ENCODE measurements at regions of chr1 and their contacts with region 1.

Region 1: DNA sequence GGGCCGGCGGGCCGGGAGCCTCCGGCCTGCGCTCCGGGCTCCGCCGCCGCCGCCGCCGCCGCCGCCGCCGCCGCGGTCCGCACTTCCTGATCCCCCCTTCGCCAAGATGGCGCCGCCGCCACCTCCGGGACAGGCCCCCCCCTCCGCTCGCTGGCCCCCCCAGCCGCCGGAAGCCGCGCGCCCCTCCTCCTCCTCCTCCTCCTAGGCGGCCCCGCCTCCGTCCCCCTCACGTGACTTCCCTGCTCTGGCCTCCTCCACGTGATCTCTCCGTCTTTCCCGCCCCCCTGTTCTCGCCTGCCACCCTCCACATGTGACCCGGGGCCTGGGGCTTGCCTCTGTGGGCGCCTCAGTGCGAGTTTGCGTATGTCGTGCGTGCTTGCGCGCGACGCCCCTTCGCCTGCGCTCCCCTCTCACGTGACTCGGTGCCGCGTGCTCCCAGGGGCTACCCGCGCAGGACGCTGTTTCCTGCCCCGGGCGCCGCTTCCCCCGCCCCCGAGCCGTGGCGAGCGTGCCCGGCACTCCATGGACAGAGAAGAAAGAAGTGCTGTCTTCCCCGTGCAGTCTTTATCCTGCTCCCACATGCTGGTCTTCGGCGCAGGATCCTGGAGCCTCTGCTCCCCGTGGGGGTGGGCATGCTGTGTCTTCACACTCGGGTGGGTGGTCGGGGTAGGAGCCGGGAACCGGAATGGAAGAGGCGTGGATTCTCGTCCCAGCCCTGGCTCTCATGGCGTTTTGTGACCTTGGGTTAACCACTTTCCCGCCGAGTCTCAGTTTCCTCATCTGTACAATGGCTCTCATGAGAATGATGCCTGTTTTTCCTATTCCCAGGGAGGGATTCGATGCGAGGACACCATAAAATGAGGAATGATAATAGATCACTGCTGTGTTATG is at the start of gene UBE2Q1:
- DNase-seq: peak; percentile 92 to 100 (median 100)
- ATAC-seq: peak; percentile 94
- H3K4me3 ChIP-seq: peak within 1 kb of the TSS; percentile 81
- H3K4me3 Mint-ChIP-seq: peak within 1 kb of the TSS; percentile 89 to 98 (median 96)
- H3K27ac ChIP-seq: peak within 1 kb of the TSS; percentile 86
- H3K27ac Mint-ChIP-seq: peak within 1 kb of the TSS; percentile 90 to 97 (median 94)
- H3K4me1 ChIP-seq: peaks cover 18 to 23% of the 10 kb centered on the region in 2 donors
- H3K4me1 Mint-ChIP-seq: peaks cover 12 to 45% (median 39%) of the 10 kb centered on the region in 7 donors
- H3K27me3 ChIP-seq: no peaks in the 10 kb centered on the region
- H3K27me3 Mint-ChIP-seq: peaks cover 0 to 2% (median 0%) of the 10 kb centered on the region in 5 donors
- total RNA-seq, gene UBE2Q1: 63.2 to 117 (median 106) TPM

Region 2: DNA sequence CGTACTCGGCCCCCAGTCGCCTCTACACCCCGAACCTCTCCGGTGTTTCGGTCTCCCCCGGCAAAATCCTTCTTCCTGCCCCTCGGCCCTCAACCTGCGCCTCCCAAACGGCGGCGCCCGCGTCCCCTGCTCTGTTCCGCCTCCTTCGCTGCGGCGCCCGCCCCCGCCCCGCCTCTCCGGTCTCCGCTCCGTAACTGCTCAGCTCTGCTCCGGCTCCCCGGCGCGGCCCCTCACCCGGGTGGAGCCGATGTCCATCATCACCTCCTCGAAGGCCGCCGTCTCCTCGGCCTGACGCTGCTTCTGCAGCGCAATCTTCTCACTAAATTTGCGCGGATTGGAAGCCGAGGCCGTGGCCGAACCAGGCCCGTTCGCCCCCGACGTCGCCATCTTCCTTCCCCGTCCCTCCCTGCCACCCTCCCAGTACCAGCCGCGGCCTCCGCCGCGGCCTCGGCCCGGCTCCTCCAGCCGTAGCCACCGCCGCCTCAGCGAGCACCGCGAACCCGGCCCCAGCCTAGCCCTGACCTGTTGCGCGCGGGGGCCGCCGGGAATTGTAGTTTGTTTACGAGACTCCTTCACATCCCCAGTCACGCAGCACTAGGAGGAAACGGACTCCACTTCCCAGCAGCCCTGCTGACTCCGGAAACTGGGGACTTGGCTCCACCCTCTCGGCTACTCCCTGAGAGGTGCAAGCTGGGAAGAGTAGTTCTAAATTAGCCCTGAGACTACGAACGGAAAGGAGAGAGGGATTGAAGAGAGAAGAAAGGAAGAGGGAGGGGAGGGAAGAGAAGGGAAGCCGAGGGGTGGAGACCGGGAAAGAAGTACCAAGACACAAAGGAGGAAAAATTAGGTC is 600.5 kb before region 1 on chr1 and contains the start of gene CRTC2:
- CTCF ChIA-PET with region 1: no interaction called
- POLR2A ChIA-PET with region 1: no interaction called
- intact Hi-C with region 1: loop called in 1 of 2 experiments (anchors 2 kb)
- DNase-seq: peak; percentile 86 to 99 (median 96)
- ATAC-seq: peak; percentile 94
- H3K4me3 ChIP-seq: peak within 1 kb of the TSS; percentile 74
- H3K4me3 Mint-ChIP-seq: peak within 1 kb of the TSS; percentile 91 to 100 (median 97)
- H3K27ac ChIP-seq: peak within 1 kb of the TSS; percentile 92
- H3K27ac Mint-ChIP-seq: peak within 1 kb of the TSS; percentile 89 to 98 (median 94)
- H3K4me1 ChIP-seq: peaks cover 36% of the 10 kb centered on the region in 2 donors
- H3K4me1 Mint-ChIP-seq: peaks cover 34 to 71% (median 67%) of the 10 kb centered on the region in 7 donors
- H3K27me3 ChIP-seq: no peaks in the 10 kb centered on the region
- H3K27me3 Mint-ChIP-seq: no peaks in the 10 kb centered on the region
- total RNA-seq, gene CRTC2: 86.1 to 157 (median 119) TPM

Region 3: GRCh38 chr1:154324669-154325582 is 233.9 kb before region 1 on chr1 and contains the start of gene ATP8B2:
- CTCF ChIA-PET with region 1: interaction called, 3 read pairs
- POLR2A ChIA-PET with region 1: no interaction called
- intact Hi-C with region 1: loop called (anchors 2 kb)
- DNase-seq: peak; percentile 60 to 82 (median 77)
- ATAC-seq: peak; percentile 80
- H3K4me3 ChIP-seq: peak within 1 kb of the TSS; percentile 79
- H3K4me3 Mint-ChIP-seq: peak within 1 kb of the TSS; percentile 92 to 98 (median 96)
- H3K27ac ChIP-seq: peak within 1 kb of the TSS; percentile 94
- H3K27ac Mint-ChIP-seq: peak within 1 kb of the TSS; percentile 80 to 95 (median 92)
- H3K4me1 ChIP-seq: peaks cover 24 to 36% of the 10 kb centered on the region in 2 donors
- H3K4me1 Mint-ChIP-seq: peaks cover 27 to 42% (median 38%) of the 10 kb centered on the region in 7 donors
- H3K27me3 ChIP-seq: no peaks in the 10 kb centered on the region
- H3K27me3 Mint-ChIP-seq: peaks cover 0 to 31% (median 0%) of the 10 kb centered on the region in 5 donors
- total RNA-seq, gene ATP8B2: 105 to 130 (median 117) TPM

Region 4: GRCh38 chr1:154627257-154628120 is 68.7 kb after region 1 on chr1:
- CTCF ChIA-PET with region 1: interaction called, 10 read pairs
- POLR2A ChIA-PET with region 1: interaction called, 3 read pairs
- intact Hi-C with region 1: loop called in 1 of 2 experiments (anchors 1 kb)
- DNase-seq: peak; percentile 78 to 92 (median 90)
- ATAC-seq: peak; percentile 81
- H3K4me3 ChIP-seq: peak overlapping the region; percentile 72
- H3K4me3 Mint-ChIP-seq: peak overlapping the region; percentile 85 to 100 (median 94)
- H3K27ac ChIP-seq: peak overlapping the region; percentile 99
- H3K27ac Mint-ChIP-seq: peak overlapping the region; percentile 98 to 100 (median 99)
- H3K4me1 ChIP-seq: peaks cover 15% of the 10 kb centered on the region in 2 donors
- H3K4me1 Mint-ChIP-seq: peaks cover 20 to 54% (median 44%) of the 10 kb centered on the region in 7 donors
- H3K27me3 ChIP-seq: no peaks in the 10 kb centered on the region
- H3K27me3 Mint-ChIP-seq: peaks cover 0 to 20% (median 7%) of the 10 kb centered on the region in 5 donors

Region 5: GRCh38 chr1:154791292-154792166 is 232.7 kb after region 1 on chr1:
- CTCF ChIA-PET with region 1: interaction called, 14 read pairs
- POLR2A ChIA-PET with region 1: no interaction called
- intact Hi-C with region 1: loop called in 1 of 2 experiments (anchors 1 kb)
- DNase-seq: peak; percentile 46 to 94 (median 91)
- ATAC-seq: peak; percentile 99
- H3K4me3 ChIP-seq: peak overlapping the region; percentile 6
- H3K4me3 Mint-ChIP-seq: peak overlapping the region; percentile 63 to 83 (median 78)
- H3K27ac ChIP-seq: peak overlapping the region; percentile 38
- H3K27ac Mint-ChIP-seq: peak overlapping the region; percentile 59 to 95 (median 84)
- H3K4me1 ChIP-seq: peaks cover 22 to 23% of the 10 kb centered on the region in 2 donors
- H3K4me1 Mint-ChIP-seq: peaks cover 18 to 56% (median 40%) of the 10 kb centered on the region in 7 donors
- H3K27me3 ChIP-seq: no peaks in the 10 kb centered on the region
- H3K27me3 Mint-ChIP-seq: peaks cover 0 to 23% (median 0%) of the 10 kb centered on the region in 5 donors

Region 6: DNA sequence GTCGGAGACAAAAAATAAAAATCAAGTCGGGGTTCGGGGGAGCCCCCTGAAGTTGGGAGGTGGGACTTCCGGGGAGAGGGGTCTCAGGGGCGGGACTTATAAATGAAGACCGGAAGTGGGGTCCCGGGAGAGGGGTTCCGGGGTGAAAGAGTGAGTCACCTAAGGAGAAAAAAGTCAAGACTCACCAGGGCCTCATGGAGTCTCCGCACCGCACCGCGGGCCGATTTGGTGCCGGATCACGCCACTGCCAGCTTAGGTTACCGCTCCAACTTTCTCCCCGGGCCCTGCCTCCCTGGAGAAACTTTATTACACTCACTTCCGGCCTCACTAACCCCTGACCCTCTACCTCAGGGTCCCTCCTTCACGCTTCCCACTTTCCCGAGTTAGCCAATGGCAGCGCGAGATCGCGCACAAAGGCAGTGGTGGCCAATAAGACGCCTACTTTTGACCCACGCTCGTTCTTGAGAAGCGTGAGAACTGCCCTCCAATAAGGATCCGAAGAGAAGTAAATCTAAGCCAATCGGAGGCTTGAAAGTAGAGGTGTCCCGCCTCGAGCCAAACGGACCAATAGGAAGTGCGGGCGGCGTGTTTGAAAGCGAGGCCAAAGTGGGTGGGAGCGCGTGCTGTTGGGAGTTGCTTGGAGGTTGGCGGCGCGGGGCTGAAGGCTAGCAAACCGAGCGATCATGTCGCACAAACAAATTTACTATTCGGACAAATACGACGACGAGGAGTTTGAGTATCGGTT is 415.4 kb after region 1 on chr1 and contains the start of gene CKS1B:
- CTCF ChIA-PET with region 1: interaction called, 3 read pairs
- POLR2A ChIA-PET with region 1: no interaction called
- intact Hi-C with region 1: loop called (anchors 1 kb)
- DNase-seq: peak; percentile 86 to 100 (median 98)
- ATAC-seq: peak; percentile 89
- H3K4me3 ChIP-seq: peak within 1 kb of the TSS; percentile 82
- H3K4me3 Mint-ChIP-seq: no peak within 1 kb of the TSS
- H3K27ac ChIP-seq: peak within 1 kb of the TSS; percentile 94
- H3K27ac Mint-ChIP-seq: no peak within 1 kb of the TSS
- H3K4me1 ChIP-seq: peaks cover 28 to 35% of the 10 kb centered on the region in 2 donors
- H3K4me1 Mint-ChIP-seq: peaks cover 27 to 39% (median 31%) of the 10 kb centered on the region in 7 donors
- H3K27me3 ChIP-seq: no peaks in the 10 kb centered on the region
- H3K27me3 Mint-ChIP-seq: no peaks in the 10 kb centered on the region
- total RNA-seq, gene CKS1B: 8.4 to 105 (median 10.2) TPM

Region 7: GRCh38 chr1:155135415-155136028 is 576.7 kb after region 1 on chr1 and contains the start of gene SLC50A1:
- CTCF ChIA-PET with region 1: no interaction called
- POLR2A ChIA-PET with region 1: no interaction called
- intact Hi-C with region 1: loop called in 1 of 2 experiments (anchors 2 kb)
- DNase-seq: peak; percentile 86 to 96 (median 90)
- ATAC-seq: peak; percentile 93
- H3K4me3 ChIP-seq: peak within 1 kb of the TSS; percentile 99
- H3K4me3 Mint-ChIP-seq: peak within 1 kb of the TSS; percentile 91 to 100 (median 98)
- H3K27ac ChIP-seq: peak within 1 kb of the TSS; percentile 99
- H3K27ac Mint-ChIP-seq: peak within 1 kb of the TSS; percentile 95 to 100 (median 98)
- H3K4me1 ChIP-seq: peaks cover 8 to 15% of the 10 kb centered on the region in 2 donors
- H3K4me1 Mint-ChIP-seq: peaks cover 41 to 58% (median 46%) of the 10 kb centered on the region in 7 donors
- H3K27me3 ChIP-seq: no peaks in the 10 kb centered on the region
- H3K27me3 Mint-ChIP-seq: peaks cover 0 to 2% (median 0%) of the 10 kb centered on the region in 5 donors
- total RNA-seq, gene SLC50A1: 21.1 to 35.6 (median 24.3) TPM

Measured in naive thymus-derived CD4-positive, alpha-beta T cell (primary cell).